IMR-90 (cell line): ENCODE measurements at regions of chr17 and their contacts with region 1.

Region 1: DNA sequence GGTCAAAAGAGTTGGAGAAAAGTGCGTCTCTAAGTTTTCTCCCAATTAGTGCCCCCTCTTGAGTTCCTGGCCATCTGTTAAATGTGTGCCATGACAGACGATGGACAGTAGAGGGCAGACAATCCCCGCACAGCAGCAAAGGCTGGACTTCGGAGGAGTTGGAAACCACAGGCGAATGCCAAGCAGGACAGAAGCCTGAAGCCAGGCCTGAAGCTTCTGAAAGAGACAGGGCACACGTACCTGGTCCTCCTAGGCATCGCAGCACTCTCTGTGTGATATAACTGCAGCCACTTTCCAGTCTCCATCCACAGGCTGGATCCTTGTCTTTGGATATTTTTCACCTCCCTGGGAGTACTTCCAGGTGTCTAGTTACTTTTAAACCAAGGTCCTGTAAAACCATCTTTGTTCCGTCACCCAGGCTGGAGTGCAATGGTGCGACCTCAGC is 14.5 kb downstream of the C17orf100 start:
- DNase-seq: peak; percentile 79
- ATAC-seq: peak; percentile 100
- H3K4me3 ChIP-seq: no peak overlapping the region
- H3K27ac ChIP-seq: no peak overlapping the region
- H3K4me1 ChIP-seq: no peaks in the 10 kb centered on the region
- H3K27me3 ChIP-seq: peaks cover 29% of the 10 kb centered on the region
- CTCF ChIP-seq: peak; percentile 97
- POLR2A ChIP-seq: no peak; the same call in 1 of the 2 replicates
- RAD21 ChIP-seq: peak; percentile 98

Region 2: DNA sequence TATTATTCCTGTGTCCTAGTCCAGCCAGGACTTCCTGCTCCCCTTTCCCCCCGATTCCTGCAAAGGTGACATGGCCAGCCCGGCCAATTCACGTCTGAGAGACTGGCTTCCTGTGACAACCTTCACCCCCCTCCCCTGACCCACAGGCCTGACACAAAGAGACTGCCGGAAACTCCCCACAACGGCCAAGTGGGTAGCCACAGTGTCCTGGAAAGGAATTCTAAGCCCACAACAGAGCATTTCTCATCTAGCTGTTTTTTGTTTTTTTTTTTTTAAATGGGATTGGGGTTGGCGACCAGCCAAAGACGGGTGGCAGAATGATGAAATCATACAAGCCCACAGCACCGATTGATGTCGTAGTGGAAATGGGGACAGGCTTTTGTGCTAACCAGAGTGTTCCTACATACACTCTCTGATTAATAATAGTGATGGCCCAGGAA is 86.9 kb after region 1 on chr17:
- CTCF ChIA-PET with region 1: no interaction called
- POLR2A ChIA-PET with region 1: no interaction called
- dilution Hi-C with region 1: no loop called
- in situ Hi-C with region 1: no loop called
- intact Hi-C with region 1: loop called (anchors 10 kb)
- DNase-seq: peak; percentile 77
- ATAC-seq: peak; percentile 48
- H3K4me3 ChIP-seq: no peak overlapping the region
- H3K27ac ChIP-seq: peak overlapping the region; percentile 92
- H3K4me1 ChIP-seq: peaks cover 15% of the 10 kb centered on the region
- H3K27me3 ChIP-seq: no peaks in the 10 kb centered on the region
- CTCF ChIP-seq: no peak
- POLR2A ChIP-seq: no peak
- RAD21 ChIP-seq: no peak

Region 3: DNA sequence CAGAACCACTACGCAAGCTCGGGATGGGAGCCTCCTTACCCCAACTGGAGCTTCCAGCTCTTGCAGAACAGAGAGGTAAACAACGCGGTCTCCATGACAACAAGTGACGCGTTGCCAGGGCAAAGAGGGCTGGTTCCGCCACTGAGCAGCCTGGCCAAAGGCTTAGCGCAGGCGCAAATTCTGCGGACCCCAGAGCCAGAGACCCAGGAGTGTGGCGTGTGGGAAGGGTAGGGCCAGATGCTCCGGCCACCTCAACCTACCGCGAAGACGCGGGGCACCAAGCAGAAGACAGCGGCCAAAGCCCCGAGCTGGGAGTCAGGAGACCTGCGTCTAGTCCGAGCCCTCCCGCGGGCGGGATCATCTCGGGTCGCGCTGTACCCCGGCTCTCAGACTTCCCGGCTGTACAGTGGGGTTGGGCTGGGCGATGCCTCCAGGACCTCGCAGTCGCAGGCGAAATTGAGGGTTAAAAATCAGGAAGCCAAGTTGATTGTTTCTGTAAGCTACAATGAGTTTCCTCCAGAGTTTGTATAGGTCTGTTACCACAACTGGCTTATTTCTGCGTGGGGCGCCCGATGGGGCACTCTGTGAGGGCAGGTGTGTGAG is 165.7 kb after region 1 on chr17 and contains the start of gene TEKT1:
- CTCF ChIA-PET with region 1: interaction called, 3 read pairs
- POLR2A ChIA-PET with region 1: no interaction called
- dilution Hi-C with region 1: no loop called
- in situ Hi-C with region 1: loop called (anchors 10 kb)
- intact Hi-C with region 1: no loop called
- DNase-seq: peak; percentile 26
- ATAC-seq: peak; percentile 87
- H3K4me3 ChIP-seq: no peak within 1 kb of the TSS
- H3K27ac ChIP-seq: no peak within 1 kb of the TSS
- H3K4me1 ChIP-seq: no peaks in the 10 kb centered on the region
- H3K27me3 ChIP-seq: peaks cover 12% of the 10 kb centered on the region
- CTCF ChIP-seq: no peak
- POLR2A ChIP-seq: no peak
- RAD21 ChIP-seq: no peak
- total RNA-seq, gene TEKT1: not detected in 2 replicates

Region 4: DNA sequence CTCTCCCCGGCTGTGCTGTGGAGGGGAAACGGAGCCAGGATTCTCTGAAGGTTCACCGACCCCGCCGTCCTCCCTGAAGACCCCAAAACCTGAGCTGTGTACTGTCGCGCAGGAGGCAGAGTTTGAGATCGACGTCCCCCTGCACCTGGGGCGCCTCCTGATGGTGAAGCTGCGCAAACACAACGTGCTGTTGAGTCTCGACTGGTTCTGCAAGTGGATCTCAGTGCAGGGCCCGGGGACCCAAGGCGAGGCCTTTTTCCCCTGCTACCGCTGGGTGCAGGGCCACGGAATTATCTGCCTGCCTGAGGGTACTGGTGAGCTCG is 228.1 kb after region 1 on chr17:
- CTCF ChIA-PET with region 1: interaction called, 3 read pairs
- POLR2A ChIA-PET with region 1: no interaction called
- dilution Hi-C with region 1: no loop called
- in situ Hi-C with region 1: no loop called
- intact Hi-C with region 1: loop called (anchors 2 kb)
- DNase-seq: no peak
- ATAC-seq: no peak; the same call in 1 of the 2 replicates
- H3K4me3 ChIP-seq: no peak overlapping the region
- H3K27ac ChIP-seq: no peak overlapping the region
- H3K4me1 ChIP-seq: no peaks in the 10 kb centered on the region
- H3K27me3 ChIP-seq: peaks cover 39% of the 10 kb centered on the region
- CTCF ChIP-seq: 0 out of 2 replicates have a peak, but pooled peaks have one; percentile 14
- POLR2A ChIP-seq: no peak
- RAD21 ChIP-seq: peak; percentile 22; the same call in 1 of the 2 replicates

Region 5: DNA sequence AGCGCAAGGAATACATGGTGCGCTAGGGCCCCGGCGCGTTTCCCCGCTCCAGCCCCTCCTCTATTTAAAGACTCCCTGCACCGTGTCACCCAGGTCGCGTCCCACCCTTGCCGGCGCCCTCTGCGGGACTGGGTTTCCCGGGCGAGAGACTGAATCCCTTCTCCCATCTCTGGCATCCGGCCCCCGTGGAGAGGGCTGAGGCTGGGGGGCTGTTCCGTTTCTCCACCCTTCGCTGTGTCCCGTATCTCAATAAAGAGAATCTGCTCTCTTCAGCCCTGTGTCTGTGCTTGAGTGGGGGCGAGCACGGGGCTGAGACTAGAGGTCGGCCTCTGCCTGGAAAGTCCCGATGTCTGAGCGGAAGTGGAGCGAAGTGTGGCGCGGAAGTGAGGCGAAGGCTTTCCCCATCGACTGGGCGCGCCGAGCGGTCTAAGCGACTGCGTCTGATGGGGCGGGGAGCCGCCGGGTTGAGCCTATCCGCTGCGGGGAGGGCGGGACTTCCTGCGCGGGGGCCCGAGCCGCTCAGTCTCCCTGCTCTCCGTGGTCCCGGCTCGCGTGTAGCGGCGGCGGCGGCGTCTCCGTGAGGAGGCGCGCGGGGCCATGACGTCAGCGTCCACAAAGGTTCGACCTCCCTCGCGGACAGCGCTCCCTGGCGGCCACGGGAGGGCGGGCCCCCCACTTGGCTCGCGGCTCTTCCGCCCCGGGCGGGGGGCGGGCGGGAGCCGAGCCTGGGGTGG is 348.3 kb after region 1 on chr17:
- CTCF ChIA-PET with region 1: no interaction called
- POLR2A ChIA-PET with region 1: no interaction called
- dilution Hi-C with region 1: no loop called
- in situ Hi-C with region 1: loop called (anchors 10 kb)
- intact Hi-C with region 1: loop called (anchors 2 kb)
- DNase-seq: peak; percentile 96
- ATAC-seq: peak; percentile 90
- H3K4me3 ChIP-seq: peak overlapping the region; percentile 72
- H3K27ac ChIP-seq: peak overlapping the region; percentile 94
- H3K4me1 ChIP-seq: peaks cover 3% of the 10 kb centered on the region; the same call in 1 of the 2 replicates
- H3K27me3 ChIP-seq: no peaks in the 10 kb centered on the region
- CTCF ChIP-seq: peak; percentile 79
- POLR2A ChIP-seq: peak; percentile 80
- RAD21 ChIP-seq: no peak; the same call in 1 of the 2 replicates

Region 6: GRCh38 chr17:7081341-7082062 is 415.4 kb after region 1 on chr17:
- CTCF ChIA-PET with region 1: no interaction called
- POLR2A ChIA-PET with region 1: no interaction called
- dilution Hi-C with region 1: no loop called
- in situ Hi-C with region 1: no loop called
- intact Hi-C with region 1: no loop called
- DNase-seq: no peak
- ATAC-seq: no peak
- H3K4me3 ChIP-seq: no peak overlapping the region
- H3K27ac ChIP-seq: no peak overlapping the region
- H3K4me1 ChIP-seq: no peaks in the 10 kb centered on the region
- H3K27me3 ChIP-seq: peaks cover 8% of the 10 kb centered on the region
- CTCF ChIP-seq: no peak
- POLR2A ChIP-seq: no peak
- RAD21 ChIP-seq: no peak